Activated CD4-positive, alpha-beta T cell treated with anti-CD3 and anti-CD28 coated beads for 36 hours (primary cell): ENCODE measurements at regions of chr10 and their contacts with region 1.

Region 1: GRCh38 chr10:60572511-60573194 is 183.0 kb upstream of the ANK3 start:
- DNase-seq: peak; percentile 71
- ATAC-seq: peak; percentile 62
- H3K4me3 Mint-ChIP-seq: peak overlapping the region; percentile 78
- H3K27ac Mint-ChIP-seq: peak overlapping the region; percentile 93
- H3K4me1 Mint-ChIP-seq: peaks cover 54% of the 10 kb centered on the region
- H3K27me3 Mint-ChIP-seq: no peaks in the 10 kb centered on the region

Region 2: DNA sequence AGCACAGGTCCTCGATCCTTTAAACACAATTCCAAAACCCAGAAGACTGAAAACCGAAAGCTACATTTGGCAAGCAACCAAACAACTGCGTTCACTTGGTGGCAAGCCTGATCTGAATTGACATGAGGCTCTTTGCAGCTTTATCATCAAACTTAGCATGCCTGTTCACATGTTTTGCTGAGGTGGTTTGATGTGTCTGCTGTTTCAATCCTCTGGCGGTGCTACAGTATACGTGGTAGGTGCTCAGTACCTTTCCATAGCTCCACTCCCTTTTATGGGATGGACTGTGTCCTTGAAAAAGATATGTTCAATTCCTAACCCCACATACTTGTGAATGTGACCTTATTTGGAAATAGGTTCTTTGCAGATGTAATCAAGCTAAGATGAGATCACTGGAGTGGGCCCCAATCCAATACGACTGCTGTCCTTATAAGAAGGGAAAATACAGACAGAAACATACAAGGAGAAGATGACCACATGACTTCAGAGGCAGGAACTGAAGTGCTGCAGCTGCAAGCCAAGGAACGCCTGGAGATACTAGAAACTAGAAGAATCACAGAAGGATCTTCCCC is 699.7 kb before region 1 on chr10:
- CTCF ChIA-PET with region 1: no interaction called
- POLR2A ChIA-PET with region 1: no interaction called
- intact Hi-C with region 1: loop called in 1 of 2 experiments (anchors 10 kb)
- DNase-seq: peak; percentile 28
- ATAC-seq: no peak
- H3K4me3 Mint-ChIP-seq: peak overlapping the region; percentile 23
- H3K27ac Mint-ChIP-seq: peak overlapping the region; percentile 53
- H3K4me1 Mint-ChIP-seq: peaks cover 82% of the 10 kb centered on the region
- H3K27me3 Mint-ChIP-seq: no peaks in the 10 kb centered on the region

Region 3: DNA sequence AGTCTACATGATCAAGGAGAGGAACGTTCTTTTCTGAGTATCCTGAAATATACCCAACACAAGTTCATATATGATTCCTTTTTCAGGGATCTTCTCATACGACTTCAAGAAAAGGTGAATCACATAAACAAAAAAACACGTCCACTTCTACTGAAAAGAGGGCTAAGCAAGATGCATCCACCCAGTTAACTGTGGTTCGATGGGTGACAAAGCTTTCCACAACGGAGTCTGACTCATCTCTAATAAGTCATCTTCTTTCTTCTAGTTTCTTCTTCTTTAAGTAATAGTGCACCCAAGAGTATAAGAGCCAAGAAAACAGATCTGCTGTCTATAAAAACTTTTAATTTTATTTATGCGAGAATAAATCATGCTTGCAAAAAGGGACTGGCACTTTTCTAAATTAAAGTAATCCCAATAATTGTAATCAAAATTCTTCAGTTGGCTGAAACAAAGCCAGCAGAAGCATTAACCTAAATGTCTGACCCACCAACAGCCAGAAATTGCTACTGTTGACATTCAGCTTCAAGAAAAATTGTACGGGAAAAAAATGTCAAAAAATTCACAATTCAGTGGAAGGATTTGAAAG is 36.0 kb before region 1 on chr10:
- CTCF ChIA-PET with region 1: interaction called, 5 read pairs
- POLR2A ChIA-PET with region 1: no interaction called
- intact Hi-C with region 1: loop called (anchors 1 kb)
- DNase-seq: peak; percentile 54
- ATAC-seq: peak; percentile 94
- H3K4me3 Mint-ChIP-seq: peak overlapping the region; percentile 44
- H3K27ac Mint-ChIP-seq: peak overlapping the region; percentile 55
- H3K4me1 Mint-ChIP-seq: peaks cover 57% of the 10 kb centered on the region
- H3K27me3 Mint-ChIP-seq: no peaks in the 10 kb centered on the region

Region 4: DNA sequence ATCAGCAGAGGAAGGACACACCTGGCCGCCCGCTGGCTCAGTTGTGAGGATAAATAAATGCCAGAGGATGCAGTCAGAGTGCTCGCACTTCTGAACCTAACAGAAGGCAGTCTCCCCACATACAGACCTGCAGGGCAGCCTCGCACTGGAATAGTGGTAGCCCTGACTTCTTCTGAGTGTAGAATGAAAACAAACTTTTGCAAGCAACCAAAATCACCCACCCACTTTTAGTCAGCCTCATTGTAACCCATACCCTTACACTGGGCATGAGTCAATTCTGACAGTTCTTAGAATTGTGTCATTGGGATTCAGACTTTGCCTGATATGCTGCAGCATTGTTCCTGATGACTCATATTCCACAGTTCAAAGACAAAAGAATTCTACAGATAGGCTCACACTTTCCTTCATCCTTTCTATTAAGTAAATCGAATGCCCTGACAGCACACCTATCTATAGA is 38.7 kb after region 1 on chr10:
- CTCF ChIA-PET with region 1: interaction called, 4 read pairs
- POLR2A ChIA-PET with region 1: no interaction called
- intact Hi-C with region 1: loop called (anchors 1 kb)
- DNase-seq: peak; percentile 55
- ATAC-seq: peak; percentile 93
- H3K4me3 Mint-ChIP-seq: peak overlapping the region; percentile 26
- H3K27ac Mint-ChIP-seq: peak overlapping the region; percentile 66
- H3K4me1 Mint-ChIP-seq: peaks cover 35% of the 10 kb centered on the region
- H3K27me3 Mint-ChIP-seq: no peaks in the 10 kb centered on the region

Region 5: GRCh38 chr10:60778214-60779029 is 205.8 kb after region 1 on chr10 and contains the start of gene CDK1:
- CTCF ChIA-PET with region 1: no interaction called
- POLR2A ChIA-PET with region 1: interaction called, 3 read pairs
- intact Hi-C with region 1: loop called (anchors 1 to 5 kb)
- DNase-seq: peak; percentile 98
- ATAC-seq: peak; percentile 99
- H3K4me3 Mint-ChIP-seq: peak within 1 kb of the TSS; percentile 98
- H3K27ac Mint-ChIP-seq: peak within 1 kb of the TSS; percentile 96
- H3K4me1 Mint-ChIP-seq: peaks cover 17% of the 10 kb centered on the region
- H3K27me3 Mint-ChIP-seq: no peaks in the 10 kb centered on the region
- total RNA-seq, gene CDK1: 88.5 to 138 TPM

Region 6: GRCh38 chr10:60816628-60817397 is 244.2 kb after region 1 on chr10:
- CTCF ChIA-PET with region 1: no interaction called
- POLR2A ChIA-PET with region 1: no interaction called
- intact Hi-C with region 1: no loop called
- DNase-seq: peak; percentile 42
- ATAC-seq: peak; percentile 86
- H3K4me3 Mint-ChIP-seq: no peak overlapping the region
- H3K27ac Mint-ChIP-seq: no peak overlapping the region
- H3K4me1 Mint-ChIP-seq: no peaks in the 10 kb centered on the region
- H3K27me3 Mint-ChIP-seq: no peaks in the 10 kb centered on the region

Region 7: DNA sequence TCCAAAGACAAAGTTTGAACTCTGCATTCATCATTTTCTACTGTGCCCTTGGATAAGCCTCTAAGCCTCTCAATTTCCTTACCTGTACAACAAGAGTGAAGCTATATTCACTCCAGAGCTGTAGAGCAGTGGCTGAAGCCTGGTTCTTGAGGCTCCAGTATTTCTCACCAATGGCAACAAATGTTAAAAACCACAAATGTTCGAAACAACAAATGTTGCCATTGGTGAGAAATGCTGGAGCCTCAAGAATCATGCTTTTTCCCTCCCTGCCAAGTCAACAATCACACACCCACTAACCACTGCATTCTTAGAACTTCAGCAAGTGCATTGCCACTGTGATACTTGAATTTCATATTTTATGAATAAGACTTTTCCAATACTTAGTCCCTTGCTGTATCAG is 642.6 kb after region 1 on chr10:
- CTCF ChIA-PET with region 1: no interaction called
- POLR2A ChIA-PET with region 1: no interaction called
- intact Hi-C with region 1: no loop called
- DNase-seq: no peak
- ATAC-seq: no peak
- H3K4me3 Mint-ChIP-seq: no peak overlapping the region
- H3K27ac Mint-ChIP-seq: no peak overlapping the region
- H3K4me1 Mint-ChIP-seq: no peaks in the 10 kb centered on the region
- H3K27me3 Mint-ChIP-seq: peaks cover 2% of the 10 kb centered on the region